Gastrocnemius medialis (tissue), 4 donors: ENCODE measurements at regions of chr3 and their contacts with region 1.

Region 1: GRCh38 chr3:53709860-53710674 is 136.2 kb downstream of the CHDH start:
- DNase-seq: peak; percentile 15 to 53
- ATAC-seq: peak; percentile 60 to 91
- H3K4me3 ChIP-seq: no peak overlapping the region
- H3K27ac ChIP-seq: no peak overlapping the region
- H3K4me1 ChIP-seq: peaks cover 0 to 3% of the 10 kb centered on the region in 2 donors
- H3K27me3 ChIP-seq: no peaks in the 10 kb centered on the region
- CTCF ChIP-seq: peak; percentile 64 to 84 (median 78)
- POLR2A ChIP-seq: no peak

Region 2: DNA sequence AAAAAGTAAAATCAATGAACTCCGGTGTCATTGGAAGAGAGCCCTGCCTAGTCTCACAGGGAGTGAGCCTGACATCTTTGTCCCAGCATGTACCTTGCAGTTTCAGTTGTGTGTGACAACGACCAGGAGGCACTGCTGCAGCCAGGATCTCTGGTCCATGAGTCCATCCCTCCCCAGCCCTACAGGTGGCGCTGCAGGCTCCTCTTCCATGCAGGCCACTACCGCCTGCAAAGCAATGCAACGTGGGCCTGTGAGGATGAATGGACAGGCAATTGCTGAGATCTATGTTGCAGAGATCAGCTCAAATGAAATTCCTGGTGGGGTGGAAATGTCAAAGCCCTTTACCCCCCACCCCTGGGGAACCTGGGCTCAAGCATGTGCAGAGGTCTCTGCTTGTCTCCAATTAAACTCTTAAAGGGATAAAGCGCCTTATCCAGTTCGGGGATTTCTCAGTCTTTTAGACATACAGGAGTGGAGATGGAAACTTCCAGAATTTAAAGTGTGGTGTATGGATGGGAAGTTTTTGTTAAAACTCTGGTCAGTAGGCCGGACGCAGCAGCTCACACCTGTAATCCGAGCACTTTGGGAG is 490.1 kb before region 1 on chr3:
- in situ Hi-C with region 1: no loop called
- intact Hi-C with region 1: loop called (anchors 10 kb)
- DNase-seq: peak; percentile 48 to 69
- ATAC-seq: peak; percentile 86 to 88
- H3K4me3 ChIP-seq: no peak overlapping the region
- H3K27ac ChIP-seq: no peak overlapping the region
- H3K4me1 ChIP-seq: no peaks in the 10 kb centered on the region
- H3K27me3 ChIP-seq: no peaks in the 10 kb centered on the region
- CTCF ChIP-seq: peak; percentile 57 to 89 (median 79)
- POLR2A ChIP-seq: no peak

Region 3: GRCh38 chr3:53293867-53294266 is 416.2 kb before region 1 on chr3:
- in situ Hi-C with region 1: loop called in 3 of 4 experiments (anchors 5 to 10 kb)
- intact Hi-C with region 1: loop called (anchors 1 kb)
- DNase-seq: no peak
- ATAC-seq: no peak
- H3K4me3 ChIP-seq: no peak overlapping the region
- H3K27ac ChIP-seq: no peak overlapping the region
- H3K4me1 ChIP-seq: peaks cover 13 to 19% of the 10 kb centered on the region in 2 donors
- H3K27me3 ChIP-seq: no peaks in the 10 kb centered on the region
- CTCF ChIP-seq: no peak
- POLR2A ChIP-seq: no peak

Region 4: GRCh38 chr3:53303957-53304356 is 406.1 kb before region 1 on chr3:
- in situ Hi-C with region 1: loop called (anchors 5 to 10 kb)
- intact Hi-C with region 1: loop called (anchors 1 kb)
- DNase-seq: no peak
- ATAC-seq: no peak
- H3K4me3 ChIP-seq: no peak overlapping the region
- H3K27ac ChIP-seq: peak overlapping the region; percentile 71 to 81 (median 76)
- H3K4me1 ChIP-seq: peaks cover 10 to 19% of the 10 kb centered on the region in 2 donors
- H3K27me3 ChIP-seq: no peaks in the 10 kb centered on the region
- CTCF ChIP-seq: no peak
- POLR2A ChIP-seq: no peak

Region 5: DNA sequence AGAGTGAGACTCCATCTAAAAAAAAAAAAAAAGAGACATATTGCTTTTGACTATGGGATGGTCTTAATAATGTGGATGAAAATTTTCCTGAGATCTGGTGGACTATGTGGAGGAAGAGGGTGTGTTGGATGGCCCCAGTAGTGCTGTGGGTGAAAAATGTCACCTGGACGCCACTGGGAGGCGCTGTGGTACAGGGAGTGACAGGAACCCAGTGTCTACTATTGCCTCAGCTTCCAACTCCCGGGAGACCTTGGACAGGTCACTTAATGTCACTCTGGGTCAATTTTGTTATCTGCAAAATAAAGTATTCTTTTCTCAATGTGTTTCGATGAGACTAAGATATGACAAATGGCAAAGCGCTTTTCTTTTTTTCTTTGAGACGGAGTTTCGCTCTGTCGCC is 335.0 kb before region 1 on chr3:
- in situ Hi-C with region 1: loop called in 2 of 4 experiments (anchors 10 to 25 kb)
- intact Hi-C with region 1: no loop called
- DNase-seq: peak; percentile 3 to 27
- ATAC-seq: peak in 1 of 2 donors; percentile 72
- H3K4me3 ChIP-seq: no peak overlapping the region
- H3K27ac ChIP-seq: no peak overlapping the region
- H3K4me1 ChIP-seq: no peaks in the 10 kb centered on the region
- H3K27me3 ChIP-seq: no peaks in the 10 kb centered on the region
- CTCF ChIP-seq: peak; percentile 39 to 55 (median 45)
- POLR2A ChIP-seq: no peak

Region 6: DNA sequence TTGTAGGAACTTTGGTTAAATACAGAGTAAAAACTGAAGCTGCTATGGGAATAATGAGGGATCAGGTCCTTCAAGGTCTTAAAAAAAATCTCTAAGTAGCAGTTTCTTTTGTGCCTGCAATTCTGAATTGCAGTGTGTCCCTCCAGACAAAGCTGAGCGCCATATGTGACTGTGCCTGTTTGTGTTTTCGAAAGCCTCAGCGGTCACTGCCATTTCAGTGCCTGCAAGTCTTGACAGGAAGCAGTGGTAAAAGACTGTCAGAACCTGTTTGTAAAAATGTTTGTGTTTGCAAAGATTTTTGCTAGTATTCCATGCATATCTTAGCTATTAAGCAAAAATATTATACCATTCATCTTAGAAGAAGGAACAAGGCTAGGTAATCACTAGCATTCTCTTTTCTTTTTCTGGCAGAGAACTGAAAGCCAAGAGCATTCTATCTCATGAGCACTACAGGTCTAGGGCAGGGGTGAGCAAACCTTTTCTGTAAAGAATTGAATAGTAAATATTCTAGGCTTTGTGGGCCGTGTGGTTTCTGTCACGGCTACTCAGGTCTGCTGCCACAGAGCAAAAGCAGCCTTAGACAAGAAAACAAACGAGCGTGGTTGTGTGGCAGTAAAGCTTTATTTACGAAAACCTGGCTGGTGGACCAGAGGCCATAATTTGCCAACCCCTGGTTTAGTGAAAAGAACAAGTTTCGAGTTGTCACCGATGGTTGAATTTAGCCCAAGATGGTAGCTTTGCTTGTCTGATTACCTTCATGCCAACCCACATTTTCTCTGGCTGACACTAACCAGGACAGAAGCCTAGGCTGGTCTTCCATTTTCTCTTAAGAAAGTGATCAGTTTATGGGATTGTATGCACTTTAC is 81.3 kb before region 1 on chr3:
- in situ Hi-C with region 1: no loop called
- intact Hi-C with region 1: loop called (anchors 2 kb)
- DNase-seq: no peak
- ATAC-seq: no peak
- H3K4me3 ChIP-seq: no peak overlapping the region
- H3K27ac ChIP-seq: no peak overlapping the region
- H3K4me1 ChIP-seq: no peaks in the 10 kb centered on the region
- H3K27me3 ChIP-seq: peaks cover 0 to 6% (median 0%) of the 10 kb centered on the region in 3 donors
- CTCF ChIP-seq: no peak
- POLR2A ChIP-seq: no peak

Region 7: DNA sequence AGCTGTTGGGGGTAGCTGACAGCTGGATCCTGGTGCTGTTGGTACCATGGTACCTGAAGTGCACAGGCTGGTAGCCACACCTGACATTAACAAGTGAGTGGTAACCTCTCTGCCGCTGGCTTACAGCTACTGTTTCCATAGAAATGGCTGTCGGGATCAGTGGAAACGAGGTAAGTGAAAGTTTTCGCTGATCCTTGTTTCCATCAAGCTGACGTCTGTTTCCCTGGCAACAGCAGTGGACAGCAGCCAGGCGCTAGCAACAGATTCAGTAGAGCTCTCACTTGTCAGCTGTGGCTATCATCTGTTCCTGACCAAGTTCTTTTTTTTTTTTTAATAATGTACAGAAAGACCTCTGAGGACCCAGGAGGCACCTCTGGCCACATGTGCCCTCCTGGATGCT is 30.0 kb before region 1 on chr3:
- in situ Hi-C with region 1: no loop called
- intact Hi-C with region 1: loop called (anchors 2 kb)
- DNase-seq: no peak
- ATAC-seq: no peak
- H3K4me3 ChIP-seq: no peak overlapping the region
- H3K27ac ChIP-seq: no peak overlapping the region
- H3K4me1 ChIP-seq: peaks cover 20 to 22% of the 10 kb centered on the region in 2 donors
- H3K27me3 ChIP-seq: no peaks in the 10 kb centered on the region
- CTCF ChIP-seq: no peak
- POLR2A ChIP-seq: no peak